ENCODE measurements at regions of chr2 and their contacts with region 1.

Region 1: GRCh38 chr2:109348671-109349550 is 219.9 kb downstream of the SH3RF3 start:
- DNase-seq: no peak
- ATAC-seq: peak; percentile 16 to 77 (median 49)
- H3K4me3 ChIP-seq: no peak overlapping the region
- H3K27ac ChIP-seq: peak overlapping the region in 7 of 10 donors; percentile 5 to 61 (median 40)
- H3K4me1 ChIP-seq: peaks cover 17 to 44% (median 37%) of the 10 kb centered on the region in 9 donors
- H3K27me3 ChIP-seq: no peaks in the 10 kb centered on the region
- CTCF ChIP-seq: peak in 1 of 9 donors; percentile 15

Region 2: GRCh38 chr2:109238580-109238979 is 110.3 kb before region 1 on chr2:
- intact Hi-C with region 1: no loop called
- DNase-seq: peak in 1 of 2 donors; percentile 59
- ATAC-seq: peak in 7 of 8 donors; percentile 42 to 80 (median 57)
- H3K4me3 ChIP-seq: no peak overlapping the region
- H3K27ac ChIP-seq: peak overlapping the region in 4 of 10 donors; percentile 1 to 78 (median 48)
- H3K4me1 ChIP-seq: peaks cover 14 to 79% (median 43%) of the 10 kb centered on the region in 9 donors
- H3K27me3 ChIP-seq: no peaks in the 10 kb centered on the region
- CTCF ChIP-seq: no peak

Region 3: DNA sequence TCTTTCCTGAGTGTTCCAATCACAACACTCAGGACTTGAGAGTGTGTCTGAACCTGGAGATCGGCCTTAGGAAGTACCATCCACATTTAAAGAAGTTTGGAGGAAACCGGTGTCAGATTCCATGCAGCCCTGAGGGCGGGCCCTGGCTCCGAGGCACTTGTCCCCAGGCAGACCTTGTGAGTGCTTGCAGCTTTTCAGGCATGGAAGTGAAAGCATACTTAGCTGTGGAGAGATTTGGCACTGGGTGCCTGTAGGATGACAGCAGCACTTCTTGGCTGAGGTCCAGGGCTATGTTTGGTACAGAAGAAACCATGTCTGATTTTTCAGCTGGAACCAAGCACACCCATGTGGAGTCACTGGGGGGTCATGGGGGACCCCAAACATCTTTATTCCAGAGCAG is 34.0 kb after region 1 on chr2:
- intact Hi-C with region 1: loop called in 2 of 10 experiments (anchors 5 kb)
- DNase-seq: peak; percentile 48 to 87
- ATAC-seq: peak; percentile 86 to 96 (median 93)
- H3K4me3 ChIP-seq: no peak overlapping the region
- H3K27ac ChIP-seq: peak overlapping the region in 7 of 10 donors; percentile 4 to 56 (median 41)
- H3K4me1 ChIP-seq: peaks cover 17 to 48% (median 30%) of the 10 kb centered on the region in 9 donors
- H3K27me3 ChIP-seq: no peaks in the 10 kb centered on the region
- CTCF ChIP-seq: no peak

Measured in heart right ventricle (tissue), 16 donors.